ENCODE measurements at regions of chr3 and their contacts with region 1.

Region 1: GRCh38 chr3:44338010-44338827 is at the start of gene TCAIM:
- DNase-seq: peak; percentile 99
- H3K4me3 ChIP-seq: peak within 1 kb of the TSS; percentile 61 to 78 (median 69)
- H3K27ac ChIP-seq: peak within 1 kb of the TSS; percentile 90 to 97 (median 96)
- H3K4me1 ChIP-seq: peaks cover 0 to 47% (median 30%) of the 10 kb centered on the region in 4 donors
- H3K27me3 ChIP-seq: no peaks in the 10 kb centered on the region
- CTCF ChIP-seq: no peak
- EP300 ChIP-seq: peak in 1 of 4 donors; percentile 6
- POLR2A ChIP-seq: peak; percentile 94 to 95
- total RNA-seq, gene TCAIM: 30.3 to 39.3 (median 33.8) TPM

Region 2: DNA sequence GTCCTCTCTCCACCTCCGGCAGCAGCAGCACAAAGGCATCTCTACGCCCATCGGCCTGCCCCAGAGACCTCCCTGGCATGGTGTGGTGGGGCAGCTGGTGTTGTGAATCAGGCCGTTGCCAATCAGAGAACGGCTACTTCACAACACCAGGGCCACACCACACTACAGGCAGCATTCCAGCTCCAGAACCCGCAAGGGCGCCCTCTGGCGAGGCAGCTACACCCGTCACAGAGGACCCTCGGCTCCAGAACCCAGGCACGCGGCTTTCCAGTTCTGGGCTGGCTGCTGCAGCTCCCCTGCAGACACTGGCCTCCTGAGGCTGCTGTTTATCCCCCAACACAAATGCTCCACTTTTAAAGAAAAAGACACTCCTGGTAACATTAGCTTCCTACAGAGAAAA is 224.1 kb before region 1 on chr3:
- intact Hi-C with region 1: no loop called
- DNase-seq: no peak
- H3K4me3 ChIP-seq: no peak overlapping the region
- H3K27ac ChIP-seq: no peak overlapping the region
- H3K4me1 ChIP-seq: no peaks in the 10 kb centered on the region
- H3K27me3 ChIP-seq: peaks cover 0 to 3% (median 0%) of the 10 kb centered on the region in 3 donors
- CTCF ChIP-seq: no peak
- EP300 ChIP-seq: no peak
- POLR2A ChIP-seq: no peak

Region 3: GRCh38 chr3:44439499-44440295 is 101.5 kb after region 1 on chr3:
- intact Hi-C with region 1: loop called (anchors 5 kb)
- DNase-seq: peak; percentile 93
- H3K4me3 ChIP-seq: peak overlapping the region in 2 of 4 donors; percentile 3 to 4
- H3K27ac ChIP-seq: peak overlapping the region; percentile 79 to 88 (median 84)
- H3K4me1 ChIP-seq: peaks cover 0 to 26% (median 23%) of the 10 kb centered on the region in 4 donors
- H3K27me3 ChIP-seq: no peaks in the 10 kb centered on the region
- CTCF ChIP-seq: no peak
- EP300 ChIP-seq: peak in 3 of 4 donors; percentile 52 to 89 (median 66)
- POLR2A ChIP-seq: no peak

Region 4: GRCh38 chr3:44477312-44478030 is 139.3 kb after region 1 on chr3 and contains the start of gene ZNF445:
- intact Hi-C with region 1: loop called (anchors 1 kb)
- DNase-seq: peak; percentile 88
- H3K4me3 ChIP-seq: peak within 1 kb of the TSS; percentile 47 to 92 (median 82)
- H3K27ac ChIP-seq: peak within 1 kb of the TSS; percentile 72 to 87 (median 83)
- H3K4me1 ChIP-seq: peaks cover 0 to 33% (median 18%) of the 10 kb centered on the region in 4 donors
- H3K27me3 ChIP-seq: no peaks in the 10 kb centered on the region
- CTCF ChIP-seq: no peak
- EP300 ChIP-seq: no peak
- POLR2A ChIP-seq: no peak
- total RNA-seq, gene ZNF445: 7.1 to 13.3 (median 10.6) TPM

Measured in sigmoid colon (tissue), 7 donors.